ENCODE measurements at regions of chr2 and their contacts with region 1.

Region 1: DNA sequence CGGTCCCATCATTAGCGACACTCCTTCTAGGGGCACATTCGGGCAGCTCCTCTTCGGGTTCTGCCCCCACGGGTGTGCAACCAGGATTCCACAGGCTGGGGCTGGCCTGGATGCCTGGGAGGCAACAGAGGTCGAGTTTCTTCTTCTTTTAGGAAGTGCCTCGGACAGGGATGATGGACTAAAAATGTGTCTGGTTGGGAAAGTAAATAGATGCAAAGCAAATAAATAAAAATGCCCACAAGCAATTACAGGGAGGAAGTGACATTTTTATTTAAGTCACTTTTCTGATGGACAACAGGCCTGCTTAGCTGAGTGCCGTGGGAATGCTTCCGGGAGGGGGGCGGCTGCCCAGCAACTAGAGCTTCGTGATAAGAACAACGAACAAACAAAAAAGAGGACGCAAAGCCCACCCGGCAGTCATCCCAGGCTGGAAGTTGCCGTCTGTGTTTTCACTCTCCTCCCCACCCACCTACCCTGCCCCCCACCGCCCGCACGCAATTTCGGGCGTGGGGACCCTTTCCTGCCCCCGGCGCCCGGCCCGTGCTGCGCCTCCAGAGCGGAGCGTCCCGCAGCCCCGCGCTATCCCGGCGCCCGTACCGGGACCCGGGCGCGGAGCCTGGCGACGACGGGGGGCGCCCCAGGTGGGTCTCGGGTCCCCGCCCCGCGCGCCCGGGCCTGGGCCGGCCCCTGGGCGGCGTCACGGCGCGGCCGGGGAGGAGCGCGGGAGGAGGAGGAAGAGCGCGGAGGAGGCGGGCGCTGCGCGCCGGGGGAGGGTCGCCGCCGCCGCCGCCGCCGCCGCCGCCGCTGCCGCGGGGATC is 412 bp upstream of the NCK2 start:
- DNase-seq: peak; percentile 60 to 80 (median 70)
- ATAC-seq: peak; percentile 72
- H3K4me3 Mint-ChIP-seq: peak overlapping the region; percentile 78 to 93 (median 87)
- H3K27ac Mint-ChIP-seq: peak overlapping the region; percentile 87 to 99 (median 96)
- H3K4me1 Mint-ChIP-seq: peaks cover 52 to 86% (median 79%) of the 10 kb centered on the region in 4 donors
- H3K27me3 Mint-ChIP-seq: no peaks in the 10 kb centered on the region

Region 2: GRCh38 chr2:105576440-105577252 is 167.7 kb before region 1 on chr2:
- POLR2A ChIA-PET with region 1: interaction called, 22 read pairs
- DNase-seq: peak in 5 of 10 donors; percentile 11 to 62 (median 42)
- ATAC-seq: peak; percentile 62 to 85
- H3K4me3 Mint-ChIP-seq: peak overlapping the region in 3 of 10 donors; percentile 7 to 67 (median 65)
- H3K27ac Mint-ChIP-seq: peak overlapping the region; percentile 64 to 96 (median 88)
- H3K4me1 Mint-ChIP-seq: peaks cover 11 to 32% (median 24%) of the 10 kb centered on the region in 4 donors
- H3K27me3 Mint-ChIP-seq: no peaks in the 10 kb centered on the region

Region 3: GRCh38 chr2:105775809-105776559 is 31.7 kb after region 1 on chr2:
- POLR2A ChIA-PET with region 1: interaction called, 37 read pairs
- DNase-seq: peak in 7 of 10 donors; percentile 26 to 71 (median 52)
- ATAC-seq: peak; percentile 66 to 75
- H3K4me3 Mint-ChIP-seq: peak overlapping the region; percentile 67 to 89 (median 80)
- H3K27ac Mint-ChIP-seq: peak overlapping the region; percentile 88 to 99 (median 97)
- H3K4me1 Mint-ChIP-seq: peaks cover 55 to 97% (median 96%) of the 10 kb centered on the region in 4 donors
- H3K27me3 Mint-ChIP-seq: no peaks in the 10 kb centered on the region

Region 4: GRCh38 chr2:105787376-105788318 is 43.3 kb after region 1 on chr2:
- POLR2A ChIA-PET with region 1: interaction called, 16 read pairs
- DNase-seq: peak in 3 of 10 donors; percentile 38 to 77 (median 49)
- ATAC-seq: peak in 1 of 2 donors; percentile 24
- H3K4me3 Mint-ChIP-seq: peak overlapping the region; percentile 12 to 85 (median 70)
- H3K27ac Mint-ChIP-seq: peak overlapping the region; percentile 88 to 96 (median 93)
- H3K4me1 Mint-ChIP-seq: peaks cover 48 to 100% (median 98%) of the 10 kb centered on the region in 4 donors
- H3K27me3 Mint-ChIP-seq: no peaks in the 10 kb centered on the region

Region 5: DNA sequence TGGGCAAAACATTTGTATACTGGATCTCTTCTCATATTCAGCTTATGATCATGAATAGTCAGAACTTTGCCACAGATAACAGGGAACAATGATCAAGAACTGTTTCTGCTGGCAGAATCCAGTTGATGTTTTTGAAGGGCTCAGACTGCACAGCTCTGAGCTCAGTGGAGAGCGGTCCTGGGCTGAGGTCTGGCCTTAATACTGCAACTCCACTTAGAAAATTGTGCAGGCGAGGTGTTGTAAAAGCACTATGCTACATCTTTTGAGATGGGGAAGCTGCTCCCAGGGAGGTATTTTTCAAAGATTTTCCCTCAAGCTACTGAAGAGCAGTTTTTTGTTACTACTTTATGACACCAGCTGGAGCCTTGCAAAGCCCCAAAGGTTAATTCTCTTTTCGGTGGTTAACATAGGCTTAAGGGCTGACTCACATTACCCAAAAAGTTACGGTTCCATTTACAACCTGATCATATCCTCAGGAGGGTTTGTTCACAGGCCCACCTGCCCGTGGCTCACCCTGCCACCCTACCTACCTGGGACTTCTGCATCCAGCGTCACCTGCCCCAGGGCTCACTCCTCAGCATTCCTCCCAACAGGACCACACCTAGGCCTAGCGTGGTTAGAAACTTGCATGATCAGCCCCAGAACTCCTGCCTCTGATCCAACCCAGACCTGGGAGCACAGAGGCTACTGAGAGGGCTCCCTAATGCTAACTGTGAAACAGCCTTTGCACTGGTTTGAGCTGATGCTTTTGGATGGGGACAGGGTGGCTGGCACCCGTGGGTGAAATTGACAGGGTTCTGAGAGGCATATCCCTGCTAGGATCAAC is 114.8 kb after region 1 on chr2:
- POLR2A ChIA-PET with region 1: interaction called, 15 read pairs
- DNase-seq: no peak
- ATAC-seq: peak in 1 of 2 donors; percentile 29
- H3K4me3 Mint-ChIP-seq: peak overlapping the region; percentile 16 to 88 (median 76)
- H3K27ac Mint-ChIP-seq: peak overlapping the region; percentile 80 to 99 (median 95)
- H3K4me1 Mint-ChIP-seq: peaks cover 50 to 96% (median 94%) of the 10 kb centered on the region in 4 donors
- H3K27me3 Mint-ChIP-seq: no peaks in the 10 kb centered on the region

Region 6: GRCh38 chr2:105877945-105878344 is 133.6 kb after region 1 on chr2:
- POLR2A ChIA-PET with region 1: no interaction called
- DNase-seq: no peak
- ATAC-seq: peak in 1 of 2 donors; percentile 47
- H3K4me3 Mint-ChIP-seq: peak overlapping the region in 8 of 10 donors; percentile 14 to 75 (median 46)
- H3K27ac Mint-ChIP-seq: peak overlapping the region; percentile 85 to 93 (median 89)
- H3K4me1 Mint-ChIP-seq: peaks cover 46 to 91% (median 86%) of the 10 kb centered on the region in 4 donors
- H3K27me3 Mint-ChIP-seq: no peaks in the 10 kb centered on the region

Region 7: DNA sequence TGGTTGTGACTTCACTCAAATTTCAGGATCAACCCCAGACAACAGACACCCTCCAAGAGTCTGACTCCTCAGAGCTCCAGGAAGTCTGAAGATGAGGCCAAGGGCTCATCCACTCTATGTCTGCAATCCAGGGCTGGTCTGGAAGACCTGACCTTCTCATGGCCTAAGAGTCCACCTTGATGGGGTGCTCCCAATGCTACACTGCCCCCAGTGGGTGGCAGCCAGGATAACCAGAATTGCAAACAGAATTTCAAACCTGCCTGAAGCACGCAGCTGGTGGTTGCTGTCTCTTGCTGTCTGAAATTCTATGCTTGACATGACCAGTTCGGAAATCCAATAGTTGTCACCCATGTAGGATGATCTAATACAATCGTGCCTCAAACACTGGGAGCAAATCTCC is 353.8 kb after region 1 on chr2:
- POLR2A ChIA-PET with region 1: interaction called, 35 read pairs
- DNase-seq: peak in 1 of 10 donors; percentile 9
- ATAC-seq: no peak
- H3K4me3 Mint-ChIP-seq: no peak overlapping the region
- H3K27ac Mint-ChIP-seq: peak overlapping the region; percentile 76 to 99 (median 94)
- H3K4me1 Mint-ChIP-seq: peaks cover 34 to 63% (median 61%) of the 10 kb centered on the region in 4 donors
- H3K27me3 Mint-ChIP-seq: no peaks in the 10 kb centered on the region